Ovary (tissue), 10 donors: ENCODE measurements at regions of chr10 and their contacts with region 1.

Region 1: DNA sequence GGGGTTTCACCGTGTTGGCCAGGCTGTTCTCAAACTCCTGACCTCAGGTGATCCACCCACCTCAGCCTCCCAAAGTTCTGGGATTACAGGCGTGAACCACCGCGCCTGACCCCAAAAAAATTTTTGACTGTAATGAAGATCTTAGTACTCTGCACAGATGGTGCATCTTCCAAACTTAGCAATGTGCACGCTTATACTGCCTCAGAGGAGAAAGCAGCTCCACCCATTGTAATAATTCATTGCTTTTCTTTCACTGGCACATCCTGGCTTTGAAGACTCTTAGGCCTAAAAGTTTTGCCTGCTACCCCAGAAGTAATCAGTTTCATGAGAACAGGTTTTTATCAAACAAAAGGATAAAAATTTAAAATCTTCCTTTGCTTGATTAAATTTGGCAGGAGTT is 52.1 kb upstream of the OIT3 start:
- DNase-seq: no peak
- H3K4me3 ChIP-seq: no peak overlapping the region
- H3K27ac ChIP-seq: no peak overlapping the region
- H3K4me1 ChIP-seq: no peaks in the 10 kb centered on the region
- H3K27me3 ChIP-seq: no peaks in the 10 kb centered on the region
- CTCF ChIP-seq: no peak
- EP300 ChIP-seq: no peak
- POLR2A ChIP-seq: no peak

Region 2: GRCh38 chr10:73054286-73054685 is 212.8 kb after region 1 on chr10:
- intact Hi-C with region 1: loop called in 1 of 4 experiments (anchors 5 kb)
- DNase-seq: no peak
- H3K4me3 ChIP-seq: no peak overlapping the region
- H3K27ac ChIP-seq: no peak overlapping the region
- H3K4me1 ChIP-seq: no peaks in the 10 kb centered on the region
- H3K27me3 ChIP-seq: no peaks in the 10 kb centered on the region
- CTCF ChIP-seq: no peak
- EP300 ChIP-seq: no peak
- POLR2A ChIP-seq: no peak